Activated T-helper 2 cell treated with anti-CD3 and anti-CD28 coated beads, Interferon-gamma antibody, Interleukin-2, Interleukin-4, amounts not matched to agents 10 μg/mL and 5 μg/mL and 100 μg/mL, durations not matched to agents 14 hours and 24 hours and 36 hours (primary cell): ENCODE measurements at regions of chr14 and their contacts with region 1.

Region 1: DNA sequence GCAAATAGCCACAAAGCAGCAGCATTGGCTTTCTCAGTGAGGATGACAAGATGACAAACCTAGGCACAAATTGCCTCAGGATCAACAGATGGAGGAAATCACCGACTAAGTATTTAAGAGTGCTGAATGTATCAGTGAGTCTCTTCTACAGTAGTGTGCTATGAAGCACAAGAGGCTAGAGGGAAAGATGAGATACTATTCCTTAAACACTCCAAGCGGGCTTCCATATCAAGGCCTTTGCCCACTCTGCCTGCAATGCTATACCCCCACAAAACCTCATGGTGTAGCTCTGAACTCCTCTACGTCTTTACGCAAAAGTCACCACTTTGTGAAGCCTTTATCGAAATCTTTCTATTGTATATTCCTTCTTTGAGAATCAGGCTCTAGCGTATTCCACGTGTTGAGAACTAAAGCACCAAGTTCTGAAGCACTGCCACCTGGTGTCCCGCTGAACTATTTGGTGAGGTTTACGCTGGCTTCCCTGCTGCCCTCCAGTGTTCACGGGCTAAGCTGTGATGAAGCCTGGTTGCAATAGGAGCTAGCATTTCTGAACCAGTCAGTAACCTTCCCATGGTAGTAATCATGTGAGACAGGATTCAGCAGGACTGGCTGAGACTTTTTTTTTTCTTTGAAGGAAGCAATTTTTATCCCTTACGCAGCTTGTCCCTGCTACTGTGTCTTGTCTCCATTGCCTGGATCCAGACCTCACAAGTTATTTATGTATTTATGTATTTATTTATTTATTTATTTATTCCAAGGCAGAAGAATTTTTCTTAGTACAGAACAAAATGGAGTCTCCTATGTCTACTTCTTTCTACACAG is 426.5 kb upstream of the OR4E1 start:
- DNase-seq: peak; percentile 49
- H3K4me3 Mint-ChIP-seq: no peak overlapping the region
- H3K27ac Mint-ChIP-seq: peak overlapping the region; percentile 46
- H3K4me1 Mint-ChIP-seq: peaks cover 46% of the 10 kb centered on the region
- H3K27me3 Mint-ChIP-seq: no peaks in the 10 kb centered on the region

Region 2: GRCh38 chr14:21656980-21657379 is 443.2 kb before region 1 on chr14:
- intact Hi-C with region 1: no loop called
- DNase-seq: no peak
- H3K4me3 Mint-ChIP-seq: no peak overlapping the region
- H3K27ac Mint-ChIP-seq: no peak overlapping the region
- H3K4me1 Mint-ChIP-seq: no peaks in the 10 kb centered on the region
- H3K27me3 Mint-ChIP-seq: peaks cover 7% of the 10 kb centered on the region

Region 3: DNA sequence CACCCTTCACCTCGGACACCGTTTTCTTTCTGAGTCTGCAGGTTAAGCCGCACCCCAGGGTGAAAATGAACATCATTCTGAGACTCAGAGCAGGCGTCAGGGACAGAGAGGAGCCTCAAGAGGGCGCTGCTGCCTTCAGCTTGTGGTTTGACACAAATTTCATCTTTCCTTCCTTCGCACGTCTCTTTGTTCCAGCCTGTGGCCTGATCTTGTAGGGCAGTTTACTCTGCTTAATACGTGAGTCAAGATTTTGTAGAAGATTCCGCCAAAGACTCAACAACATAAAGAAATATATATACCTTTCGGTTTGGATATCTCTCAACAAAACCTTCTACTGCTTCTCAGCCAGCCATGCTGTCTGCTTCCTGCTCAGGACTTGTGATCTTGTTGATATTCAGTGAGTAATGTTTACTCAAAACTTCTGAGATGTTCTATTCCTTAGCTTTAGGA is 97.3 kb before region 1 on chr14:
- intact Hi-C with region 1: loop called (anchors 5 kb)
- DNase-seq: peak; percentile 66
- H3K4me3 Mint-ChIP-seq: peak overlapping the region; percentile 74
- H3K27ac Mint-ChIP-seq: peak overlapping the region; percentile 86
- H3K4me1 Mint-ChIP-seq: peaks cover 32% of the 10 kb centered on the region
- H3K27me3 Mint-ChIP-seq: no peaks in the 10 kb centered on the region

Region 4: GRCh38 chr14:22047115-22047514 is 53.0 kb before region 1 on chr14:
- intact Hi-C with region 1: loop called (anchors 5 kb)
- DNase-seq: peak; percentile 14
- H3K4me3 Mint-ChIP-seq: peak overlapping the region; percentile 57
- H3K27ac Mint-ChIP-seq: peak overlapping the region; percentile 83
- H3K4me1 Mint-ChIP-seq: peaks cover 26% of the 10 kb centered on the region
- H3K27me3 Mint-ChIP-seq: no peaks in the 10 kb centered on the region

Region 5: GRCh38 chr14:22084393-22085281 is 15.5 kb before region 1 on chr14:
- intact Hi-C with region 1: loop called (anchors 1 kb)
- DNase-seq: no peak
- H3K4me3 Mint-ChIP-seq: peak overlapping the region; percentile 47
- H3K27ac Mint-ChIP-seq: peak overlapping the region; percentile 64
- H3K4me1 Mint-ChIP-seq: peaks cover 22% of the 10 kb centered on the region
- H3K27me3 Mint-ChIP-seq: no peaks in the 10 kb centered on the region